HCT116 (cell line): ENCODE measurements at regions of chr15 and their contacts with region 1.

Region 1: GRCh38 chr15:64430000-64430735 is 30.2 kb upstream of the ZNF609 start:
- DNase-seq: no peak
- ATAC-seq: no peak
- H3K4me3 ChIP-seq: no peak overlapping the region
- H3K27ac ChIP-seq: no peak overlapping the region
- H3K4me1 ChIP-seq: peaks cover 7 to 8% of the 10 kb centered on the region in 2 experiments; a peak in 2 of 4 replicates
- H3K27me3 ChIP-seq: no peaks in the 10 kb centered on the region
- CTCF ChIP-seq: no peak
- POLR2A ChIP-seq: no peak
- RAD21 ChIP-seq: no peak

Region 2: DNA sequence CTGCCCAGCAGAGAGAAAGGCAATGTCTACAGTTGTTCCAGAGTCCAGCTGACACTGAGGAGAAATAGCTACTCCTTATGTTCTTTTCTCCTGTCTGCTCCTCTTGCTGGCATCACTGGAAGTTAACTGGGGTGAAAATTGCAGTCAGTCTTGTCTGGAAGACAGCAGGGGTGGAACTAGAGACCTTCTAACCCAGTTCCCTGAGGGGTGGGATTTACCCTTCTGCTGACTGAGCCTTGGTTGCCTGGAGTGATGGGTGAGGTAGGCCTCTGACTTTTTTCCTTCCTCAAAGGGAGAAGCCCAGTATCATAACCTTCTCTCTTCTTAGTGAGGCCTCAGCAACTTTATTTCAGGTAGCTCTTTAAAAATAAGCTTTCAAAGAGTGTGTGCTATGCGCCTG is 46.4 kb after region 1 on chr15:
- CTCF ChIA-PET with region 1: no interaction called
- POLR2A ChIA-PET with region 1: no interaction called
- RAD21 ChIA-PET with region 1: no interaction called
- intact Hi-C with region 1: no loop called
- DNase-seq: no peak
- ATAC-seq: no peak
- H3K4me3 ChIP-seq: no peak overlapping the region
- H3K27ac ChIP-seq: no peak overlapping the region
- H3K4me1 ChIP-seq: no peaks in the 10 kb centered on the region
- H3K27me3 ChIP-seq: no peaks in the 10 kb centered on the region
- CTCF ChIP-seq: no peak
- POLR2A ChIP-seq: no peak
- RAD21 ChIP-seq: no peak

Region 3: GRCh38 chr15:64653760-64654159 is 223.6 kb after region 1 on chr15:
- CTCF ChIA-PET with region 1: interaction called, 4 read pairs
- POLR2A ChIA-PET with region 1: no interaction called
- RAD21 ChIA-PET with region 1: no interaction called
- intact Hi-C with region 1: loop called (anchors 1 kb)
- DNase-seq: no peak
- ATAC-seq: no peak
- H3K4me3 ChIP-seq: no peak overlapping the region
- H3K27ac ChIP-seq: no peak overlapping the region
- H3K4me1 ChIP-seq: no peaks in the 10 kb centered on the region
- H3K27me3 ChIP-seq: no peaks in the 10 kb centered on the region
- CTCF ChIP-seq: peak in 2 of 3 experiments; percentile 40 to 41; a peak in 4 of 6 replicates
- POLR2A ChIP-seq: no peak
- RAD21 ChIP-seq: peak; percentile 63